GM13976 (cell line): ENCODE measurements at regions of chr2 and their contacts with region 1.

Region 1: DNA sequence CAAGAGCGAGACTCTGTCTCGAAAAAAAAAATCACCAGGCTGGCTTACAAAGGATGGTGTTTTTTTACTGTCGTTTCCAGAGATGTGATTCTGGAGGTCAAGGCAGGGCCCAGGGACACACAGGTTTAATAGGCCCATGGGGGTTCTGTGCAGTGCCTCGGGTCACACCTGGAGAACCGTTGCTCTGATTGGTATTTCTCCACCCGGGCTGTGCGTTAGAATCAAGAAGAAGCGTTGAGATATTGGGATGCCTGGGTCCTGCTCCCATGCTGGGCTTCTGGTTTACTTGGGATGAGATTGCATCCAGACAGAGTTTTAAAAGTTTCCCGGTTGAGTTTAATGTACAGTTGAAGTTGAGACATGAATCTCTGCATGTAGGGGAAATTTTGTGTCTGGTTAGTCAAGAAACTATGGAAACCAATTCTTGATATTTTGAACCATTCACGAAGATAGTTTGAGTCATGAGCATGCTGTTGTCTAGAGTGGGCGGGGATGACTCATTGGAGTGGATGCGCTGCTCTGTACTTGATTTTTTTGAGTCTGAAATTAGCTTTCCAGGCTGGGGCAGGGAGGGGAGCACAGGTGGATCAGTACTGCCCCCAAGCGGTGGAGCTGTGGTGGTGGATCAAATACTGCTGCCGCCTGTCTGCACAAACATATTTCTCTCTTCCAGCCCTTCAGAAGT is 50.1 kb downstream of the GREB1 start:
- DNase-seq: peak; percentile 89
- CTCF ChIP-seq: peak; percentile 76

Region 2: GRCh38 chr2:10832203-10832936 is 751.6 kb before region 1 on chr2:
- in situ Hi-C with region 1: loop called (anchors 25 kb)
- DNase-seq: peak; percentile 93
- CTCF ChIP-seq: peak; percentile 99

Region 3: DNA sequence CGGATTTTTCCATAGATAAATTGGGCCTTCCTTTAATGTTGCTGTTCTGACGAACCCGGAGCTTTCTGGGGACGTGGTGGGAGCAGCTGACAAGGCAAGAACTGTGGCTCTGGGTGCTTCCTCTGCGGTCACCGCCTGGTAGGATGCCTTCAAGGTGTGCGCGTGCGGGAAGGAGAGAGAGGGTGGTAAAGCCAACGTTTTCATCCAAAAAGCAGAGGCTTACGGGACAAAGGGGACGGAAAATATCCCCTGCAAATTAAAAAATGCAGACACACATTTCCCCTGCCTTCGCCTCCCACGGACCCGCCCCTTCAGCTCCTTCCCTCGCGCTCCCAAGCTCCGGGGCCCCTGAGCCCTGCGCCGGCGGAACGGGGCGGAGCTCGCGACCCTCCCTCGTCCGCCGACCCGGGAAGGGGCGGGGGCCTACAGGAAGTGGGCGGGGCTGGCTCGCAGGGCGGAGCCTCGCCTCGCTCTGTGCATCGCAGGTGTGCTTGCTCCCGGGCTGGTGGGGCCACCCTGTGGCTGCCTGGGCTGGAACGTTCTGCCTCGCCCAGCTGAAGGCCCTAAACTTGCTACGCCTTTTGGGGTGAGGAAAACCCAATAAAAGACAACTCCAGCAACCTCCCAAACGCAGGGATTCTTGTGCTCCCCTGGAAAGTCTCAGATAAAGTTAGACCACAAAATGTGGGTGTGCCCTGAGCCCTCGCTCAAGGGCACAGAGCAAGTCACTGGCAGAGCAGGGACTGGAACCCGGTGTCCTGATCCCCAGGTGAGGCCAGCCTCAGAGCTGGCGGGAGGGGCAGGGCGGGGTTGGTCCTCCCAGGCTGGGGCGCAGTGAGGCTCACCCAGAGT is 454.2 kb before region 1 on chr2:
- in situ Hi-C with region 1: loop called (anchors 10 kb)
- DNase-seq: peak; percentile 82
- CTCF ChIP-seq: peak; percentile 54

Region 4: GRCh38 chr2:11224887-11225286 is 359.1 kb before region 1 on chr2:
- in situ Hi-C with region 1: no loop called
- DNase-seq: no peak
- CTCF ChIP-seq: no peak

Region 5: DNA sequence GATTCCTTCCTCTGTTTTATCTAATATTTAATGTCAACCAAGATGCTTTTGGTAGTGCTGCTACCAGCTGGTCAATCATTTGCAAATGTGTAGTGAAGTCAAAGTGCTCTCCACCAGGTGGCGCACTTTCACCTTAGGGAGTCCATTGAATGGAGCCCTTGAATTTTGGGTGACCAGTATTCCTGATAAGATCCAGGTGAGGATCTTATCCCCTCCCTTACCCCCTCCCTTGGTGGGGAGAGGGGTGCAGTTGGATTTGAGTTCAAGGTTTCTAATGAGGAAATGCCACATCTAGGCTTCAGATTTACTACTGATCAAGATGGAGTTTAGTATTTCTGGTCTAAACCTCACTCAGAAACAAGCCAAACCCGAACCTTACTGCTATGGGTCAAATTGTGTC is 106.0 kb before region 1 on chr2:
- in situ Hi-C with region 1: loop called (anchors 5 kb)
- DNase-seq: peak; percentile 70
- CTCF ChIP-seq: peak; percentile 65

Region 6: GRCh38 chr2:11488809-11489208 is 95.2 kb before region 1 on chr2:
- in situ Hi-C with region 1: no loop called
- DNase-seq: no peak
- CTCF ChIP-seq: no peak

Region 7: DNA sequence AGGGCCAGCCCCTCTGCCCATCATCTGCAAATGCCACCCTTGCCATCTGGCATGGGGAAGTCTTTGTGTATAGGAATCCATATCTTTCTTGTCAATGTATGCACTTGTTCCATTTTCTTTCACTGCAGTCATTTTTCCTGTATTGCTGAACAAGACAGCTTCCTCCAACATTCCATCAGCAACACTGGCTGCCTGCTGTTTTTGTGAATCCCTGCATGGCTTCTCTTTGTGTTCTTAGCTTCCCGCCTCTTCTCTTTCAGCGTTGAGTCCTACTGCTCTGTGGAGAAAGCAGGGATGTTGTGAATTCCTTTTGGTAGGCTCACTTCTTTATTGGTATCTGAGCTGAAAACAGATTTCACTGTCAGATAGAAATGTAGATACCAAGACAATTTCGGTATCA is 312.4 kb after region 1 on chr2:
- in situ Hi-C with region 1: no loop called
- DNase-seq: no peak
- CTCF ChIP-seq: no peak